ENCODE measurements at regions of chr2 and their contacts with region 1.

Region 1: DNA sequence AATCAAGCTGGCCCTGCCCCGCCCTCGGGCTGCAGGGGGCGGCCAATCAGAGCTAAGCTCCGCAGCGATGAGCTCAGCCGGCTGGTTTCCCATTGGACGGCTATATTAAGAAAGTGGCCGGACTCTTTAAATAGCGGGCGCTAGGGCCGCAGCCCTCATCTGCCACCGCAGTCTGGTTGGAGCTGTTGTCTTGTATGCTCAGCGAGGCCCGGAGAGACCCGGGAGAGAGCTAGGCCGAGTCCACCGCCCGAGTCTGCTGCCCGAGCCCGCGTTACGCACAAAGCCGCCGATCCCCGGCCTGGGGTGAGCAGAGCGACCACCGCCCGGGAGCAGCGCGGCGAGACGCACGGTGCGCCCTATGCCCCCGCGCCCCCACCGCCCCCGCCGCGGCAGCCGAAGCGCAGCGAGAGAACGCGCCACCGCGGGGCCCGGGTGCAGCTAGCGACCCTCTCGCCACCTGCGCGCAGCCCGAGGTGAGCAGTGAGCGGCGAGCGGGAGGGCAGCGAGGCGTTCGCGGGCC is at the start of gene RHOB:
- DNase-seq: peak; percentile 99
- ATAC-seq: peak; percentile 76 to 85
- H3K4me3 ChIP-seq: peak within 1 kb of the TSS; percentile 90
- H3K27ac ChIP-seq: peak within 1 kb of the TSS; percentile 95 to 98
- H3K4me1 ChIP-seq: peaks cover 52% of the 10 kb centered on the region
- CTCF ChIP-seq: no peak
- EP300 ChIP-seq: no peak
- POLR2A ChIP-seq: peak; percentile 99
- RAD21 ChIP-seq: no peak; a peak in 1 of 5 replicates
- polyA plus RNA-seq, gene RHOB: 110 and 157 TPM in 2 replicates

Region 2: GRCh38 chr2:20378792-20379519 is 68.0 kb before region 1 on chr2:
- CTCF ChIA-PET with region 1: interaction called, 40 read pairs
- POLR2A ChIA-PET with region 1: interaction called, 13 read pairs
- DNase-seq: peak; percentile 77 to 78
- ATAC-seq: peak; percentile 98 to 99
- H3K4me3 ChIP-seq: no peak overlapping the region
- H3K27ac ChIP-seq: peak overlapping the region; percentile 23 to 58; a peak in 4 of 6 replicates
- H3K4me1 ChIP-seq: peaks cover 10% of the 10 kb centered on the region; the same call in 1 of the 3 replicates
- CTCF ChIP-seq: peak; percentile 80
- EP300 ChIP-seq: no peak
- POLR2A ChIP-seq: no peak
- RAD21 ChIP-seq: peak; percentile 80 to 85

Region 3: GRCh38 chr2:20430461-20431300 is 16.3 kb before region 1 on chr2:
- CTCF ChIA-PET with region 1: interaction called, 12 read pairs
- POLR2A ChIA-PET with region 1: interaction called, 19 read pairs
- DNase-seq: no peak
- ATAC-seq: no peak
- H3K4me3 ChIP-seq: no peak overlapping the region
- H3K27ac ChIP-seq: no peak overlapping the region; a peak in 1 of 6 replicates
- H3K4me1 ChIP-seq: peaks cover 5% of the 10 kb centered on the region; the same call in 2 of the 3 replicates
- CTCF ChIP-seq: no peak
- EP300 ChIP-seq: no peak
- POLR2A ChIP-seq: no peak
- RAD21 ChIP-seq: no peak

Region 4: GRCh38 chr2:20490260-20491181 is 43.5 kb after region 1 on chr2:
- CTCF ChIA-PET with region 1: no interaction called
- POLR2A ChIA-PET with region 1: interaction called, 13 read pairs
- DNase-seq: peak in 1 of 2 experiments; percentile 9
- ATAC-seq: peak; percentile 22 to 25; a peak in 3 of 6 replicates
- H3K4me3 ChIP-seq: no peak overlapping the region
- H3K27ac ChIP-seq: peak overlapping the region in 1 of 2 experiments; percentile 56; a peak in 3 of 6 replicates
- H3K4me1 ChIP-seq: peaks cover 17% of the 10 kb centered on the region
- CTCF ChIP-seq: no peak
- EP300 ChIP-seq: no peak
- POLR2A ChIP-seq: no peak
- RAD21 ChIP-seq: no peak

Region 5: GRCh38 chr2:20578895-20579825 is 132.2 kb after region 1 on chr2:
- CTCF ChIA-PET with region 1: interaction called, 3 read pairs
- POLR2A ChIA-PET with region 1: interaction called, 45 read pairs
- DNase-seq: peak; percentile 89 to 93
- ATAC-seq: peak; percentile 83 to 88
- H3K4me3 ChIP-seq: no peak overlapping the region
- H3K27ac ChIP-seq: peak overlapping the region; percentile 81 to 92
- H3K4me1 ChIP-seq: peaks cover 53% of the 10 kb centered on the region
- CTCF ChIP-seq: no peak
- EP300 ChIP-seq: 0 out of 5 replicates have a peak, but pooled peaks of 1 of the 2 experiments have one; percentile 16
- POLR2A ChIP-seq: no peak
- RAD21 ChIP-seq: peak in 1 of 2 experiments; percentile 26; a peak in 1 of 5 replicates

Region 6: GRCh38 chr2:20600756-20601325 is 153.9 kb after region 1 on chr2:
- CTCF ChIA-PET with region 1: interaction called, 10 read pairs
- POLR2A ChIA-PET with region 1: interaction called, 51 read pairs
- DNase-seq: no peak
- ATAC-seq: no peak
- H3K4me3 ChIP-seq: no peak overlapping the region
- H3K27ac ChIP-seq: no peak overlapping the region; a peak in 1 of 6 replicates
- H3K4me1 ChIP-seq: peaks cover 22% of the 10 kb centered on the region
- CTCF ChIP-seq: peak; percentile 66
- EP300 ChIP-seq: no peak
- POLR2A ChIP-seq: no peak
- RAD21 ChIP-seq: peak; percentile 9 to 48; a peak in 2 of 5 replicates

Region 7: DNA sequence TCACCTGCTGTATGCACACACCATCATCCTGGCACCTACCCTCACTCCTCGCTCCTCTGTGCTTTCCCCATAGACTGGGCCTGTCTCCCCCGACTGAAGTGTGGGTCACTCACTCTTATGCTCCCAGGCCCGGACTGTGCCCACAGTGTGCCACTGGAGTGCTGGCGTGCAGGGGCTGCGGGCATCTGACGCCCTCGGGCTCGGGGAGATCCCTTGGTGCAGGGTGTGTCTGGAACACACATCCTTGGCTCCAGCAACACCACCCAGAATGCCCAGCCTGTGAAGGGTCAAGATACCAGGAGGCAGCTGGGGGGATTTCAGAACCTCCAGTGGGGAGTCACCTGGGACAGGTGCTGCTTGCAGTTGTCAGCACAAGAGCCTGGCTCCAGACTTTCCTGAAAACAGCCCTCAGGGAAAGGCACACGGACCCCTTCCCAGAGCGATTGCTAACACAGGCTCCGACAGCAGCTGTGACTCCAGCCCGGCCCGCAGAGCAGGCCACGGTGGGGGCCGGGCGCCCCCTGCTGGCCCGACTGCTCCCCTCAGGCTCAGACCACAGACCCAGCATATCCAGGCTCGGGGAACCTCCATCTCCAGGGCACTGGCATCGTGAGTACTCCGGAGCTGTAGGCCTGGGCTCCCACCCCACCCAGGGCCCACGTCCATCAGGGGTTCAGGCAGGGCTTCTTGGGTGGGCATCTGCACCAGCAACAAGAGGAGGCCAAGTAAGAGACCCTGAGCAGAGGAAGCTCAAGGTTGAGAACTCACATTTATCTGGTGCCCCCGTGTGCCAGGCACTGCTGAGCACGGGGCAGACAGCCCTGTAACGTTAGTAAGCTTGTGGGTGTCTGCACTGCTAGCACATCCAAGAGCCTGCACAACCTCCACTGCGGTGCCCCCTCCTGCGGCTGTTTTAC is 195.3 kb after region 1 on chr2:
- CTCF ChIA-PET with region 1: interaction called, 210 read pairs
- POLR2A ChIA-PET with region 1: interaction called, 102 read pairs
- DNase-seq: peak; percentile 69 to 95
- ATAC-seq: peak; percentile 89 to 99
- H3K4me3 ChIP-seq: no peak overlapping the region
- H3K27ac ChIP-seq: peak overlapping the region in 1 of 2 experiments; percentile 49; a peak in 4 of 6 replicates
- H3K4me1 ChIP-seq: peaks cover 11% of the 10 kb centered on the region; the same call in 2 of the 3 replicates
- CTCF ChIP-seq: peak; percentile 96
- EP300 ChIP-seq: no peak
- POLR2A ChIP-seq: no peak
- RAD21 ChIP-seq: peak; percentile 96